Heart right ventricle (tissue), 16 donors: ENCODE measurements at regions of chr17 and their contacts with region 1.

Region 1: DNA sequence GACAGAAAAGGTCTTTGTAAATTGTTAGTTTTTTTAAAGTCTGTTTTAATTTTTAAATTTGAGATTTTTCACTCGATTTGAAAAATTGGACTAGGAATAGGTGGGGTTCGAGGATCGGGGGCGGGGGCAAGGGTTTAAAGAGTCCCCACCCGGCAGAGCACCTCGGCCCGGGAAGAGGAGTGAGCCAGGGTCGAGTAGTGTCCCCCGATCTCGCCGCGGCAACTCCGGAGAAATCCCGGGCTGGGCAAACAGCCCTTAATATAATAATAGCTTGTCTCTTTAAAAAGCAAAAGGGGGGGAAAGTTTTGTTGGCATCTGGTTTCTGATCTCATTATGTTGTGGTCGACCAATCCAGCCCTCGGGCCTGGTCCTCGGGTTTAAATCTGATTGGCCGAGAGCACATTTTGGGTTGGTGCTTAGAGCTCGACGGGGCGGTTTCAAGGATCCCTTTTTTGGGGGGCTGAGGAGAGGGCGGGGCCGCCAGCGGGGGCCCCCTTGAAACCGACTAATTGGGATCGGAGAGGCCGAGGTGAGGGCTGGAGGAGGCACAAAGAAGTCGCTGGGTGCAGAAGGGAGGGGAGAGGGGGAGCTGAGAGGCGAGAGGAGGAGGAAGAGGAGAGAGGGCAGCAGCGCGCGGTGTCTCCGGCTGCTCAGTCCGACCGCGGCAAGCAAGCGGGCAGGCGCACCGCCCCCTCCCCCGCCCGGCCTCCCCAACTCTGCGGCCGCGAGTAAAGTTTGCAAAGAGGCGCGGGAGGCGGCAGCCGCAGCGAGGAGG is at the start of gene FZD2:
- DNase-seq: peak; percentile 74 to 90
- ATAC-seq: peak; percentile 92 to 96 (median 94)
- H3K4me3 ChIP-seq: peak within 1 kb of the TSS; percentile 22 to 69 (median 64)
- H3K27ac ChIP-seq: peak within 1 kb of the TSS; percentile 22 to 88 (median 75)
- H3K4me1 ChIP-seq: peaks cover 0 to 32% (median 12%) of the 10 kb centered on the region in 9 donors
- H3K27me3 ChIP-seq: peaks cover 0 to 48% (median 18%) of the 10 kb centered on the region in 7 donors
- CTCF ChIP-seq: no peak
- total RNA-seq, gene FZD2: 0.92 to 6.9 (median 4.0) TPM

Region 2: GRCh38 chr17:44628243-44629188 is 71.5 kb after region 1 on chr17:
- intact Hi-C with region 1: loop called in 1 of 10 experiments (anchors 5 kb)
- DNase-seq: peak; percentile 66
- ATAC-seq: peak; percentile 69 to 94 (median 88)
- H3K4me3 ChIP-seq: peak overlapping the region in 8 of 10 donors; percentile 4 to 49 (median 40)
- H3K27ac ChIP-seq: peak overlapping the region in 9 of 10 donors; percentile 61 to 89 (median 73)
- H3K4me1 ChIP-seq: peaks cover 0 to 19% (median 4%) of the 10 kb centered on the region in 9 donors
- H3K27me3 ChIP-seq: peaks cover 0 to 8% (median 0%) of the 10 kb centered on the region in 7 donors
- CTCF ChIP-seq: no peak